Endothelial cell of umbilical vein (primary cell): ENCODE measurements at regions of chr10 and their contacts with region 1.

Region 1: GRCh38 chr10:100433253-100434240 is 29.3 kb upstream of the WNT8B start:
- DNase-seq: peak; percentile 93
- H3K4me3 ChIP-seq: no peak overlapping the region
- H3K27ac ChIP-seq: no peak overlapping the region
- H3K4me1 ChIP-seq: no peaks in the 10 kb centered on the region
- H3K27me3 ChIP-seq: peaks cover 2% of the 10 kb centered on the region in 2 experiments
- CTCF ChIP-seq: peak; percentile 91 to 100
- POLR2A ChIP-seq: no peak

Region 2: GRCh38 chr10:100338434-100339036 is 95.0 kb before region 1 on chr10:
- CTCF ChIA-PET with region 1: interaction called, 110 read pairs
- POLR2A ChIA-PET with region 1: no interaction called
- dilution Hi-C with region 1: no loop called
- intact Hi-C with region 1: loop called (anchors 1 kb)
- DNase-seq: peak; percentile 63
- H3K4me3 ChIP-seq: no peak overlapping the region
- H3K27ac ChIP-seq: no peak overlapping the region
- H3K4me1 ChIP-seq: no peaks in the 10 kb centered on the region
- H3K27me3 ChIP-seq: peaks cover 7 to 8% of the 10 kb centered on the region in 2 experiments
- CTCF ChIP-seq: peak; percentile 81 to 88
- POLR2A ChIP-seq: no peak

Region 3: GRCh38 chr10:100373298-100374136 is 60.0 kb before region 1 on chr10:
- CTCF ChIA-PET with region 1: interaction called, 8 read pairs
- POLR2A ChIA-PET with region 1: no interaction called
- dilution Hi-C with region 1: no loop called
- intact Hi-C with region 1: loop called (anchors 2 kb)
- DNase-seq: peak; percentile 99
- H3K4me3 ChIP-seq: peak overlapping the region; percentile 11 to 83 (median 45)
- H3K27ac ChIP-seq: peak overlapping the region; percentile 98
- H3K4me1 ChIP-seq: peaks cover 48% of the 10 kb centered on the region
- H3K27me3 ChIP-seq: no peaks in the 10 kb centered on the region
- CTCF ChIP-seq: no peak
- POLR2A ChIP-seq: peak; percentile 80

Region 4: GRCh38 chr10:100496567-100496966 is 63.0 kb after region 1 on chr10:
- CTCF ChIA-PET with region 1: interaction called, 3 read pairs
- POLR2A ChIA-PET with region 1: no interaction called
- dilution Hi-C with region 1: loop called (anchors 10 kb)
- intact Hi-C with region 1: no loop called
- DNase-seq: no peak
- H3K4me3 ChIP-seq: no peak overlapping the region
- H3K27ac ChIP-seq: no peak overlapping the region
- H3K4me1 ChIP-seq: no peaks in the 10 kb centered on the region
- H3K27me3 ChIP-seq: no peaks in the 10 kb centered on the region
- CTCF ChIP-seq: no peak
- POLR2A ChIP-seq: no peak